BJ (cell line): ENCODE measurements at regions of chrX and their contacts with region 1.

Region 1: GRCh38 chrX:38061335-38061734 is 55.0 kb downstream of the SYTL5 start:
- DNase-seq: no peak
- H3K4me3 ChIP-seq: no peak overlapping the region
- H3K27me3 ChIP-seq: no peaks in the 10 kb centered on the region
- CTCF ChIP-seq: no peak

Region 2: DNA sequence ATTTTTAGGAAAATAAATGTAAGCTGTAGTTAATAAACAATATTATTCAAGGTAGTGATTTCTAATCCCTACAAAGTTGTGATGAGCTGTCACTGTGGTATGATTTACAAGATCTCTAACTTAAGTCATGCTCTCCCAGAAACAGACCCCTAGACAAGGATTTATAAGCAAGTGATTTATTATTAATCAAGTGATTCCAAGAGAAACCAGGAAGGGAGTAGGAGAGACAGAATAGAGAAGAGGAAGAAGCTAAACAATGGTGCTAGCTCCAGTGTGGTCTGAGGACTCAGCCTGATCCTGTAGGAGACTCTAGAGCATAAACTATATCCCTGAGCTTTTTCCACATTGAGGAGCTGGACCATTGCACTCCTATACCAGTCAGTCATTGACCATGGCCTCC is 18.1 kb after region 1 on chrX:
- CTCF ChIA-PET with region 1: no interaction called
- POLR2A ChIA-PET with region 1: no interaction called
- DNase-seq: no peak
- H3K4me3 ChIP-seq: no peak overlapping the region
- H3K27me3 ChIP-seq: no peaks in the 10 kb centered on the region
- CTCF ChIP-seq: no peak

Region 3: GRCh38 chrX:38175140-38175539 is 113.8 kb after region 1 on chrX:
- CTCF ChIA-PET with region 1: no interaction called
- POLR2A ChIA-PET with region 1: interaction called, 13 read pairs
- DNase-seq: no peak
- H3K4me3 ChIP-seq: no peak overlapping the region
- H3K27me3 ChIP-seq: no peaks in the 10 kb centered on the region
- CTCF ChIP-seq: peak; percentile 45